CD14-positive monocyte (primary cell): ENCODE measurements at regions of chr2 and their contacts with region 1.

Region 1: GRCh38 chr2:200695191-200695590 is 109.4 kb downstream of the AOX1 start:
- DNase-seq: peak; percentile 21 to 50 (median 46)
- H3K4me3 ChIP-seq: peak overlapping the region in 1 of 3 experiments; percentile 49
- H3K4me3 Mint-ChIP-seq: no peak overlapping the region
- H3K27ac ChIP-seq: peak overlapping the region; percentile 34 to 65
- H3K27ac Mint-ChIP-seq: no peak overlapping the region
- H3K4me1 ChIP-seq: peaks cover 30 to 47% of the 10 kb centered on the region in 2 donors
- H3K4me1 Mint-ChIP-seq: peaks cover 18% of the 10 kb centered on the region
- H3K27me3 ChIP-seq: no peaks in the 10 kb centered on the region
- H3K27me3 Mint-ChIP-seq: no peaks in the 10 kb centered on the region
- CTCF ChIP-seq: no peak

Region 2: GRCh38 chr2:200585730-200586643 is 109.2 kb before region 1 on chr2 and contains the start of gene AOX1:
- intact Hi-C with region 1: loop called in 1 of 2 experiments (anchors 5 kb)
- DNase-seq: peak; percentile 3 to 11 (median 8)
- H3K4me3 ChIP-seq: peak within 1 kb of the TSS; percentile 50 to 82 (median 53)
- H3K4me3 Mint-ChIP-seq: peak within 1 kb of the TSS; percentile 82 to 92
- H3K27ac ChIP-seq: no peak within 1 kb of the TSS
- H3K27ac Mint-ChIP-seq: peak within 1 kb of the TSS in 4 of 7 donors; percentile 12 to 70 (median 47)
- H3K4me1 ChIP-seq: peaks cover 12 to 14% of the 10 kb centered on the region in 2 donors
- H3K4me1 Mint-ChIP-seq: peaks cover 12% of the 10 kb centered on the region
- H3K27me3 ChIP-seq: peaks cover 0 to 10% of the 10 kb centered on the region in 2 donors
- H3K27me3 Mint-ChIP-seq: peaks cover 0 to 18% (median 8%) of the 10 kb centered on the region in 3 donors
- CTCF ChIP-seq: no peak
- polyA plus RNA-seq, gene AOX1: 0.16 TPM in 1 of 3 donors, not detected in the others

Region 3: GRCh38 chr2:200735061-200735460 is 39.9 kb after region 1 on chr2:
- intact Hi-C with region 1: no loop called
- DNase-seq: peak in 1 of 3 donors; percentile 14
- H3K4me3 ChIP-seq: no peak overlapping the region
- H3K4me3 Mint-ChIP-seq: no peak overlapping the region
- H3K27ac ChIP-seq: no peak overlapping the region
- H3K27ac Mint-ChIP-seq: no peak overlapping the region
- H3K4me1 ChIP-seq: no peaks in the 10 kb centered on the region
- H3K4me1 Mint-ChIP-seq: no peaks in the 10 kb centered on the region
- H3K27me3 ChIP-seq: no peaks in the 10 kb centered on the region
- H3K27me3 Mint-ChIP-seq: peaks cover 0 to 5% (median 0%) of the 10 kb centered on the region in 3 donors
- CTCF ChIP-seq: no peak